Naive thymus-derived CD8-positive, alpha-beta T cell (primary cell): ENCODE measurements at regions of chr11 and their contacts with region 1.

Region 1: GRCh38 chr11:77820563-77821348 is at the starts of genes AAMDC and RSF1:
- DNase-seq: peak; percentile 89 to 98 (median 97)
- ATAC-seq: peak; percentile 79 to 87
- H3K4me3 Mint-ChIP-seq: peak within 1 kb of the TSS; percentile 87 to 100 (median 100)
- H3K27ac Mint-ChIP-seq: peak within 1 kb of the TSS; percentile 92 to 99 (median 98)
- H3K4me1 Mint-ChIP-seq: peaks cover 20 to 49% (median 41%) of the 10 kb centered on the region in 4 donors
- H3K27me3 Mint-ChIP-seq: no peaks in the 10 kb centered on the region
- polyA plus RNA-seq, gene AAMDC: 18.3 to 31.5 (median 25.0) TPM
- polyA plus RNA-seq, gene RSF1: 30.6 to 33.0 (median 32.5) TPM

Region 2: DNA sequence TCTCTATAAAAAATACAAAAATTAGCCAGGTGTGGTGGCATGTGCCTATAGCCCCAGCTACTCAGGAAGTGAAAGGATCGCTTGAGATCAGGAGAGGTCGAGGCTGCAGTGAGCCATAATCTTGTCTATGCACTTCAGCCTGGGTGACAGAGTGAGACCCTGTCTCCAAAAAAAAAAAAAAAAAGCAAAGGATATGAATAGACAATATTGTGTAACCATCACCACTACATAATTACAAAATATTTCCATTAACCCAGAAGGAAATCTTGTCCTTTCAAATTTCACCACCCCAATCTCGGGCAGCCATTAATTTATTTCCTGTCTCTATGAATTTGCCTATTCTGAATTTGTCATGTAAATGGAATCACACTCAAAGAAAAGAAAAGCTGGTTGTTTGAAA is 21.4 kb before region 1 on chr11:
- POLR2A ChIA-PET with region 1: no interaction called
- DNase-seq: no peak
- ATAC-seq: no peak
- H3K4me3 Mint-ChIP-seq: no peak overlapping the region
- H3K27ac Mint-ChIP-seq: peak overlapping the region in 4 of 10 donors; percentile 27 to 55 (median 40)
- H3K4me1 Mint-ChIP-seq: peaks cover 48 to 86% (median 82%) of the 10 kb centered on the region in 4 donors
- H3K27me3 Mint-ChIP-seq: no peaks in the 10 kb centered on the region

Region 3: DNA sequence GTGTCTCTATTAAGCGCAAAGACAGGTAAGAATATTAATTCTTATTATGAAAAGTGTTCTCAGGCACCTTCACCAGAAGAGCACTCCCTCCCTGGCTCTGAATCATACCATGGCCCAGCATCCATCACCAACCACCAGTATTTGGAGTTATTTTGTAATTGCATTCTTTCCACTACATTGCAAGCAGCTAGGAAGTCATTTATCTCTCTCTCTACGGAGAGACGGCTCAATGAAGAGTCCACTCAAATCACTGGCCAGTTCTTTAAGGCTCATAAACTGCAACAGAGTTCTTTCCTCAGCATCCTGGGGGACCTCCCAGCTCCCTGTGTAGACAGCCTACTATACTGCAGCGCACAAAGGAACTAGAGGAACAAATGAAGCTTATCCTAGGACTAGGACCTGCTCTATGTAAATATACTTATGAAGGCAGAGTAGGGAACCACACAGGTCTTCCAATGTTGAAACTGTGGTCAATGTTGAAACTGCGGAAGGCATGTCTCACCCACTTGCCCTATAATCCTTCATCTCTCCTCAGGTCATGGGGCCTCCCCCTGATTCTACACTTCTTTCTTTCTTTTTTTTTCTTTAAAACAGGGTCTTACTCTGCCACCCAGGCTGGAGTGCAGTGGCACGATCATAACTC is 63.6 kb after region 1 on chr11:
- POLR2A ChIA-PET with region 1: no interaction called
- DNase-seq: no peak
- ATAC-seq: no peak
- H3K4me3 Mint-ChIP-seq: no peak overlapping the region
- H3K27ac Mint-ChIP-seq: peak overlapping the region in 3 of 10 donors; percentile 10 to 72 (median 61)
- H3K4me1 Mint-ChIP-seq: peaks cover 0 to 9% (median 3%) of the 10 kb centered on the region in 4 donors
- H3K27me3 Mint-ChIP-seq: no peaks in the 10 kb centered on the region

Region 4: GRCh38 chr11:77994412-77995362 is 173.9 kb after region 1 on chr11 and contains the start of gene INTS4:
- POLR2A ChIA-PET with region 1: interaction called, 35 read pairs
- DNase-seq: peak; percentile 89 to 99 (median 97)
- ATAC-seq: peak; percentile 96
- H3K4me3 Mint-ChIP-seq: peak within 1 kb of the TSS; percentile 90 to 97 (median 94)
- H3K27ac Mint-ChIP-seq: peak within 1 kb of the TSS; percentile 92 to 99 (median 98)
- H3K4me1 Mint-ChIP-seq: peaks cover 8 to 45% (median 32%) of the 10 kb centered on the region in 4 donors
- H3K27me3 Mint-ChIP-seq: no peaks in the 10 kb centered on the region
- polyA plus RNA-seq, gene INTS4: 36.1 to 42.7 (median 36.5) TPM